Psoas muscle (tissue), 8 donors: ENCODE measurements at regions of chr15 and their contacts with region 1.

Region 1: GRCh38 chr15:62665449-62665848 is 377.1 kb upstream of the TPM1 start:
- DNase-seq: no peak
- ATAC-seq: no peak
- H3K4me3 ChIP-seq: no peak overlapping the region
- H3K27ac ChIP-seq: no peak overlapping the region
- H3K4me1 ChIP-seq: no peaks in the 10 kb centered on the region
- H3K27me3 ChIP-seq: no peaks in the 10 kb centered on the region
- CTCF ChIP-seq: no peak

Region 2: GRCh38 chr15:62591842-62592838 is 73.3 kb before region 1 on chr15:
- intact Hi-C with region 1: no loop called
- DNase-seq: no peak
- ATAC-seq: peak in 2 of 4 donors; percentile 47 to 51
- H3K4me3 ChIP-seq: no peak overlapping the region
- H3K27ac ChIP-seq: no peak overlapping the region
- H3K4me1 ChIP-seq: no peaks in the 10 kb centered on the region
- H3K27me3 ChIP-seq: no peaks in the 10 kb centered on the region
- CTCF ChIP-seq: no peak

Region 3: DNA sequence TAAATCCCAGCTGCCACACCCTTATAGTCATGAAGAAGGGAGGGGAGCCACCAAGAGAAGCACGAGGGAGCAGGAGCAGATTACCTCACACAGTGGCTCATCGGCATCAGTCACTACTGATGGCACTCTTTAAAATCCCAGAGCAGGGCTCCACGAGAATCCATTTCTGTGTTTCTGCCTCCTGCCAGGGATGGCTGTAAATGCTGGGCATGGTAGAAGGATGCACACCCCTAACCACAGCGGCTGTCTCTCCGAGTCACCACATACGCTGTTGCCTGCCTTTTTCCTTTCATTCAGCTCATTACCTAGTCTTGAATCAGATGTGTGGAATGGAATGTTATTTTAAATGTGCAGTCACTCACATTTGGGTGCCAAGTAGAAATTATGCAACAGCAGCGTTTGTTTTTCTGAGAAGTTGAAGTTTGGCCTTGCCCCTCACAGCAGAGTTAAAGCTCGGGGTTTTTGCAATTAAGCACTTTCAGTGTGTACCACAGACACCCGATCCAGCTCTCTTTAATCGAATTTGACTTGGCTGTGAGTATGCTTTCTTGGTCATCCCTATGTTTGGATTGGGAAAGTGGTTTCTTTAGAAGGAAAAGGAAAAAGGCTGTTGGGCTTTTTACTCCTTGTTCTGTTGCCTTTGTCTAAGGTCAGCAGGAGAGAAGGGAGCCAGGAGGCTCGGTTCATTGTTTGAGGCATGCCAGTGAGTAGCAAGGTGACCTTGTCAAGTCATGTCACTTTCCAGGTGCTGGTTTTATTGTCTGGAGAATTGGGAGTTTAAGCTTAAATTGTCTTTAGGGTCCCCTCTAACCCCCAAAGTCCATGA is 92.9 kb after region 1 on chr15:
- intact Hi-C with region 1: loop called in 1 of 2 experiments (anchors 10 kb)
- DNase-seq: peak; percentile 46 to 63
- ATAC-seq: peak; percentile 58 to 85 (median 74)
- H3K4me3 ChIP-seq: no peak overlapping the region
- H3K27ac ChIP-seq: peak overlapping the region; percentile 30
- H3K4me1 ChIP-seq: peaks cover 6% of the 10 kb centered on the region
- H3K27me3 ChIP-seq: no peaks in the 10 kb centered on the region
- CTCF ChIP-seq: no peak

Region 4: DNA sequence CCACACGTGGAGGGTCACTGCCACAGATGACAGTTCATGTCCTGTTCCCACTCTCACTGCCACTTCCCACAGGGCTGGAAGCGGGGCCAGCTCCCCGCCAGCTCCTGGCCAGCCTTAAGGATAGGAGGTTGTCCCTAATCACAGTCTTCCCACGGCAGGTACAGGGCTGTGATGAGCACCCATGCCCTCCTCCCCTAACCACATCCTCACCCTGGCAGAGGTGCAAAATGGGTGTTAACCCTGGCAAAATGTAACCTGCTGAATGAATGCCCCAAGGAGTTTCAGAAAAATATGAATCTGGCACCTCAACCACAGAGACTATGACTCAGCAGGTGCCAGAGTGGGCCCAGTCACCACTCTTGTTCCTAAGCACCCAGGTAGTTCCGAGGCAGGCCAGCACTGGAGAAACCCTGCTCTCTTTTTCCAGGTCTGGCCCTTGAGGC is 192.0 kb after region 1 on chr15:
- intact Hi-C with region 1: no loop called
- DNase-seq: no peak
- ATAC-seq: no peak
- H3K4me3 ChIP-seq: no peak overlapping the region
- H3K27ac ChIP-seq: no peak overlapping the region
- H3K4me1 ChIP-seq: no peaks in the 10 kb centered on the region
- H3K27me3 ChIP-seq: peaks cover 0 to 4% (median 3%) of the 10 kb centered on the region in 3 donors
- CTCF ChIP-seq: no peak